B cell (primary cell): ENCODE measurements at regions of chr3 and their contacts with region 1.

Region 1: DNA sequence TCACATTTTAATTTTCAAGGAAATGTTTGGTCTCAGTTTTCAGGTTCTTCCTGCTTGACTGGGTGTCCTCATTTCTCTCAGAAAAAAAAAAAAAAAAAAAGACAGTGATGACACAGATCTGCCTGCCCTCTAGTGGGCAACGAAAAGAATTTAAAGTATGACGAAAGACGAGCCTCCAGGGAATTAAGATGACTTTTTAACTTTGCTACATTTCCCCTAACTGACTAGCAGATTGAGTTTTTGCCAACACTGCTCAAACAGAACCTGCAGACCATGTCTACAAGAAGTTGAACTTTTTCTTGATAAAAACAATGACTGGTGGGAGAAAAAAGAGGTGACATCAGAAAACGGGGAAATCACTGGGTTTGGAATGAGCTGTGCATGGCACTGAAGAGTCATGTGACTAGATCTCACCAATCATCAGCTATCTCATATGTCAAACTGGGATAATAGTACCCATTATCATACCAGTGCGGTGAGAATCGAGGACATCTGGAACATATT is 40.8 kb downstream of the EOMES start:
- DNase-seq: peak; percentile 87
- ATAC-seq: peak; percentile 90
- H3K4me3 ChIP-seq: peak overlapping the region in 1 of 5 experiments; percentile 26
- H3K4me3 Mint-ChIP-seq: peak overlapping the region; percentile 51
- H3K27ac ChIP-seq: no peak overlapping the region
- H3K27ac Mint-ChIP-seq: peak overlapping the region; percentile 28
- H3K4me1 ChIP-seq: peaks cover 5 to 17% of the 10 kb centered on the region in 2 donors
- H3K4me1 Mint-ChIP-seq: peaks cover 17% of the 10 kb centered on the region
- H3K27me3 ChIP-seq: peaks cover 0 to 3% (median 0%) of the 10 kb centered on the region in 4 experiments
- H3K27me3 Mint-ChIP-seq: peaks cover 4% of the 10 kb centered on the region
- CTCF ChIP-seq: peak; percentile 79

Region 2: DNA sequence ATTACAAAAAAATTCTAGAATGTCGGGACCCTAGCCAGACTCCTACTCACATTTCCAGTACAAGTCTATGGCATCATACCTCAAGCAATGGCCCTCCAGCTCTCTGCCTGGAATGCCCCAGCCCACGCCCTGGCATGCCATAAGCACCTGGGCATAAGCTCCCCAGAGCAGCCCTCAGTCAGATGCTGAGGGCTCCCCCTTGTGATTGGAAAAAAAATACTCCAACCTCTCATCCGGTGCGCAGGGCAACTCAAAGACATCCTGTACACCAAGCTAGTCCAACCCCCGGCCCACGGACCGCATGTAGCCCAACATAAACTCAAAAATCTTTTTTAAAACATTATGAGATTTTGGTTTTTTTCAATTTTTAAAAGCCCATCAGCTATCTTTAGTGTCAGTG is 427.5 kb before region 1 on chr3:
- CTCF ChIA-PET with region 1: no interaction called
- POLR2A ChIA-PET with region 1: no interaction called
- intact Hi-C with region 1: no loop called
- DNase-seq: no peak
- ATAC-seq: no peak
- H3K4me3 ChIP-seq: no peak overlapping the region
- H3K4me3 Mint-ChIP-seq: no peak overlapping the region
- H3K27ac ChIP-seq: no peak overlapping the region
- H3K27ac Mint-ChIP-seq: no peak overlapping the region
- H3K4me1 ChIP-seq: no peaks in the 10 kb centered on the region
- H3K4me1 Mint-ChIP-seq: no peaks in the 10 kb centered on the region
- H3K27me3 ChIP-seq: no peaks in the 10 kb centered on the region
- H3K27me3 Mint-ChIP-seq: peaks cover 13% of the 10 kb centered on the region
- CTCF ChIP-seq: no peak

Region 3: GRCh38 chr3:27312044-27312668 is 369.1 kb before region 1 on chr3:
- CTCF ChIA-PET with region 1: interaction called, 18 read pairs
- POLR2A ChIA-PET with region 1: no interaction called
- intact Hi-C with region 1: loop called (anchors 1 kb)
- DNase-seq: peak; percentile 66
- ATAC-seq: peak; percentile 56
- H3K4me3 ChIP-seq: no peak overlapping the region
- H3K4me3 Mint-ChIP-seq: no peak overlapping the region
- H3K27ac ChIP-seq: no peak overlapping the region
- H3K27ac Mint-ChIP-seq: no peak overlapping the region
- H3K4me1 ChIP-seq: no peaks in the 10 kb centered on the region
- H3K4me1 Mint-ChIP-seq: no peaks in the 10 kb centered on the region
- H3K27me3 ChIP-seq: no peaks in the 10 kb centered on the region
- H3K27me3 Mint-ChIP-seq: no peaks in the 10 kb centered on the region
- CTCF ChIP-seq: peak; percentile 85

Region 4: GRCh38 chr3:27649277-27649676 is 32.0 kb before region 1 on chr3:
- CTCF ChIA-PET with region 1: no interaction called
- POLR2A ChIA-PET with region 1: no interaction called
- intact Hi-C with region 1: no loop called
- DNase-seq: no peak
- ATAC-seq: no peak
- H3K4me3 ChIP-seq: no peak overlapping the region
- H3K4me3 Mint-ChIP-seq: no peak overlapping the region
- H3K27ac ChIP-seq: no peak overlapping the region
- H3K27ac Mint-ChIP-seq: no peak overlapping the region
- H3K4me1 ChIP-seq: no peaks in the 10 kb centered on the region
- H3K4me1 Mint-ChIP-seq: no peaks in the 10 kb centered on the region
- H3K27me3 ChIP-seq: no peaks in the 10 kb centered on the region
- H3K27me3 Mint-ChIP-seq: no peaks in the 10 kb centered on the region
- CTCF ChIP-seq: no peak

Region 5: DNA sequence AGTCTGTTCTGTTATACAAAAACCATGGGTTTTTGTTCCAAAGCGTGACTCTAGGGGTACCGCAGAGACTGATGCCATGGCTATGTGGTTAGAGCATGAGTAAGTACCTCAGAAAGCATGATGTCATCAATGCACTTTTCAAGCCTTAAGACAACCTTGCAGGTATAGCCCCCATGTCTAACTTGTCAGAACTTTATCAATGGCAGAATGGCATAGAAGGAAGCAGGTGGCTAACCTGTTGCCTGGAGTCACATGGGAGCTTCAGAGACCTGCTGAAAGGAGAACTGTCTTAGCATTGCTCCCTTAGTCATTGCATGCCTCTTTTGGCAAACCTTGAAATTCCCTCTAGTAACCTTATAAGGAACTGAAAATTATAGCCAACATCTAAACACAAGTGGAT is 11.7 kb before region 1 on chr3:
- CTCF ChIA-PET with region 1: interaction called, 10 read pairs
- POLR2A ChIA-PET with region 1: no interaction called
- intact Hi-C with region 1: no loop called
- DNase-seq: peak; percentile 11
- ATAC-seq: peak; percentile 21
- H3K4me3 ChIP-seq: no peak overlapping the region
- H3K4me3 Mint-ChIP-seq: no peak overlapping the region
- H3K27ac ChIP-seq: no peak overlapping the region
- H3K27ac Mint-ChIP-seq: no peak overlapping the region
- H3K4me1 ChIP-seq: peaks cover 7 to 15% of the 10 kb centered on the region in 2 donors
- H3K4me1 Mint-ChIP-seq: peaks cover 15% of the 10 kb centered on the region
- H3K27me3 ChIP-seq: no peaks in the 10 kb centered on the region
- H3K27me3 Mint-ChIP-seq: no peaks in the 10 kb centered on the region
- CTCF ChIP-seq: no peak

Region 6: DNA sequence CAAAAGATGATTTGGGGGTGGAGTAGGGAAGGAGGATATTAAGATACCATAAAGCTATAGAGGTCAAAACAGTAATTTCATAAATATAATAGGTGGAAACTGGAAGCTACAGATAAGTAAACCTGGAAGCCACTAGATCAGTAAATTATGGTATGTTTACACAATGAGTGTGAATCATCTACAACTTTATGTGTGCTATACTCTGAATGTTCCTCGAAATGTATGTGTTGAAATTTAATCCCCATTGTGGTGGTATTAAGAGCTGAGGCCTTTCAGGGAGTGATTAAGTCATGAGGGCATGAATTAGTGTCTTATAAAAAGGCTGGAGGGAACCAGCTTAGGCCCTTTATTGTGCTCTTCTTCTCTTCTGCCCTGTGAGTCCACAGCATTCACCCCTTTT is 15.6 kb after region 1 on chr3:
- CTCF ChIA-PET with region 1: interaction called, 11 read pairs
- POLR2A ChIA-PET with region 1: no interaction called
- intact Hi-C with region 1: no loop called
- DNase-seq: no peak
- ATAC-seq: no peak
- H3K4me3 ChIP-seq: no peak overlapping the region
- H3K4me3 Mint-ChIP-seq: no peak overlapping the region
- H3K27ac ChIP-seq: no peak overlapping the region
- H3K27ac Mint-ChIP-seq: no peak overlapping the region
- H3K4me1 ChIP-seq: no peaks in the 10 kb centered on the region
- H3K4me1 Mint-ChIP-seq: peaks cover 10% of the 10 kb centered on the region
- H3K27me3 ChIP-seq: no peaks in the 10 kb centered on the region
- H3K27me3 Mint-ChIP-seq: peaks cover 5% of the 10 kb centered on the region
- CTCF ChIP-seq: no peak

Region 7: DNA sequence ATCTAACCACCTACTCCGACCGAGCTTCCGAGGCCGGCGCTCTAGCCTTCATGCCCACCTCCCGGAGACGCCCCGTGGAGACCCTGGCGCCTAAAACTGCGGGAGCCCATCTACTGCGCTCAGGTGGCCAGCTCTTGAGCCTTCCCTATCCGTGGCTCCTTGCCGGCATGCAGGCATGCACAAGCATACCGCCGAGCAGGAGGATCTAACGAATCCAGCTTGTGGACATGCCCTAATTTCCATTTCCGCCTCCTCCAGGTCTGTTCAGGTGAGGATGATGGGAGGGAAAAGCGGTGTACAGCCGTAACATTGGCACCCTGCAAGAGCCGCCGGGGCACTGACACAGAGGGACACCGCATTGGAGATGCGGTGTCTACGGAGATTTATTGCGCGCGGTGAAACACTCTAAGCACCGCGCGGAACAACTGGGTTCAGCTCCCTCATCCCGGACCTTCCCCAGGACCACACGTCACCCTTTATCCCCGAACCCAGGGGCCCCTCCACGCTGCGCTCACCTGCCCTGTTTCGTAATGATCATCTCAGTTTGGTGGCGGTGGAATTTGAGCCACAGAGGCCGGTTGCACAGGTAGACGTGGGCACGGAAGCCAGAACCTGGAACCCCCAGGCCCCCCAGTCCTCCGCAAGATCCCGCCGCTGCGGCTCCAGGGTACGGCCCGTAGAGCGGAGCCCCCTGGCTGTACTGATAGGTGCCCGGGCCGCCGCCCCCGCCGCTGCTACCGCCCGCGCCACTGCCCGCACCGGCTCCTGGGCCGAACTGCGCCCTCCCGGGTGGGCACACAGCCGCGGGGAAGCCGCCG is 39.8 kb after region 1 on chr3:
- CTCF ChIA-PET with region 1: no interaction called
- POLR2A ChIA-PET with region 1: no interaction called
- intact Hi-C with region 1: no loop called
- DNase-seq: peak; percentile 46
- ATAC-seq: peak; percentile 41
- H3K4me3 ChIP-seq: peak overlapping the region in 4 of 5 experiments; percentile 5 to 57 (median 51)
- H3K4me3 Mint-ChIP-seq: peak overlapping the region; percentile 61
- H3K27ac ChIP-seq: no peak overlapping the region
- H3K27ac Mint-ChIP-seq: no peak overlapping the region
- H3K4me1 ChIP-seq: peaks cover 28 to 35% of the 10 kb centered on the region in 2 donors
- H3K4me1 Mint-ChIP-seq: peaks cover 27% of the 10 kb centered on the region
- H3K27me3 ChIP-seq: peaks cover 2 to 82% (median 70%) of the 10 kb centered on the region in 4 experiments
- H3K27me3 Mint-ChIP-seq: peaks cover 67% of the 10 kb centered on the region
- CTCF ChIP-seq: peak; percentile 3

Region 8: GRCh38 chr3:27943106-27943505 is 261.8 kb after region 1 on chr3:
- CTCF ChIA-PET with region 1: no interaction called
- POLR2A ChIA-PET with region 1: no interaction called
- intact Hi-C with region 1: no loop called
- DNase-seq: no peak
- ATAC-seq: no peak
- H3K4me3 ChIP-seq: no peak overlapping the region
- H3K4me3 Mint-ChIP-seq: no peak overlapping the region
- H3K27ac ChIP-seq: no peak overlapping the region
- H3K27ac Mint-ChIP-seq: no peak overlapping the region
- H3K4me1 ChIP-seq: no peaks in the 10 kb centered on the region
- H3K4me1 Mint-ChIP-seq: no peaks in the 10 kb centered on the region
- H3K27me3 ChIP-seq: no peaks in the 10 kb centered on the region
- H3K27me3 Mint-ChIP-seq: no peaks in the 10 kb centered on the region
- CTCF ChIP-seq: no peak